B cell (primary cell): ENCODE measurements at regions of chr10 and their contacts with region 1.

Region 1: GRCh38 chr10:14500172-14500765 is 169.5 kb upstream of the FRMD4A start:
- DNase-seq: no peak
- ATAC-seq: no peak
- H3K4me3 ChIP-seq: no peak overlapping the region
- H3K4me3 Mint-ChIP-seq: no peak overlapping the region
- H3K27ac ChIP-seq: no peak overlapping the region
- H3K27ac Mint-ChIP-seq: no peak overlapping the region
- H3K4me1 ChIP-seq: peaks cover 13 to 16% of the 10 kb centered on the region in 2 donors
- H3K4me1 Mint-ChIP-seq: peaks cover 27% of the 10 kb centered on the region
- H3K27me3 ChIP-seq: no peaks in the 10 kb centered on the region
- H3K27me3 Mint-ChIP-seq: no peaks in the 10 kb centered on the region
- CTCF ChIP-seq: no peak

Region 2: DNA sequence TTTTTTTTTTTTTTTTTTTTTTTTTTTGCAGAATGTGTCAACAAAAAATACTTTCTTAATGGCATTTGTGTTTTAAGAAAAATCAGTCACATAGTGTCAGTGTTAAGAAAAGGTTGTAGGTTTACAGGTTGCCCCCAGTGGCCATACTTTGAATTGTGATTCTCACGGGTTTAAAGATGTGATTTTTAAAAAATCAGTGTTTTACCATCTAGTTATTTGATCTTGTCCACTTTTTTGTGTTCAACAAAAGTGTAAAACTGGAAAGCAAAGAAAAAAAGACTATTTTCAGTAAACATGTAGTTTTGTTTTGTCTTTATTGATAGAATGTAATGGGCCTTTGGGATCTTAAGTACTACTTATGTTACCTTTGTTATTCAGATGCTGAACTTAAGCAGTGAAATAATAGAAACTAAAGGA is 404.1 kb after region 1 on chr10:
- CTCF ChIA-PET with region 1: interaction called, 7 read pairs
- POLR2A ChIA-PET with region 1: no interaction called
- intact Hi-C with region 1: loop called (anchors 1 kb)
- DNase-seq: peak; percentile 40
- ATAC-seq: peak; percentile 54
- H3K4me3 ChIP-seq: no peak overlapping the region
- H3K4me3 Mint-ChIP-seq: no peak overlapping the region
- H3K27ac ChIP-seq: no peak overlapping the region
- H3K27ac Mint-ChIP-seq: peak overlapping the region; percentile 15
- H3K4me1 ChIP-seq: no peaks in the 10 kb centered on the region
- H3K4me1 Mint-ChIP-seq: peaks cover 6% of the 10 kb centered on the region
- H3K27me3 ChIP-seq: no peaks in the 10 kb centered on the region
- H3K27me3 Mint-ChIP-seq: no peaks in the 10 kb centered on the region
- CTCF ChIP-seq: peak; percentile 78

Region 3: GRCh38 chr10:14971867-14972448 is 471.7 kb after region 1 on chr10:
- CTCF ChIA-PET with region 1: interaction called, 16 read pairs
- POLR2A ChIA-PET with region 1: no interaction called
- intact Hi-C with region 1: loop called (anchors 2 kb)
- DNase-seq: peak; percentile 68
- ATAC-seq: peak; percentile 58
- H3K4me3 ChIP-seq: no peak overlapping the region
- H3K4me3 Mint-ChIP-seq: no peak overlapping the region
- H3K27ac ChIP-seq: no peak overlapping the region
- H3K27ac Mint-ChIP-seq: no peak overlapping the region
- H3K4me1 ChIP-seq: no peaks in the 10 kb centered on the region
- H3K4me1 Mint-ChIP-seq: peaks cover 2% of the 10 kb centered on the region
- H3K27me3 ChIP-seq: peaks cover 0 to 14% (median 0%) of the 10 kb centered on the region in 4 experiments
- H3K27me3 Mint-ChIP-seq: peaks cover 14% of the 10 kb centered on the region
- CTCF ChIP-seq: peak; percentile 85